ENCODE measurements at regions of chr20 and their contacts with region 1.

Region 1: GRCh38 chr20:51404298-51405060 is 138.0 kb downstream of the NFATC2 start:
- DNase-seq: peak; percentile 21 to 78 (median 36)
- ATAC-seq: peak; percentile 89
- H3K4me3 ChIP-seq: no peak overlapping the region
- H3K4me3 Mint-ChIP-seq: peak overlapping the region in 5 of 10 donors; percentile 3 to 74 (median 21)
- H3K27ac ChIP-seq: peak overlapping the region; percentile 62
- H3K27ac Mint-ChIP-seq: peak overlapping the region; percentile 82 to 100 (median 97)
- H3K4me1 ChIP-seq: peaks cover 48 to 95% of the 10 kb centered on the region in 2 donors
- H3K4me1 Mint-ChIP-seq: peaks cover 42 to 89% (median 62%) of the 10 kb centered on the region in 7 donors
- H3K27me3 ChIP-seq: no peaks in the 10 kb centered on the region
- H3K27me3 Mint-ChIP-seq: no peaks in the 10 kb centered on the region

Region 2: GRCh38 chr20:49594143-49594930 is 1810.1 kb before region 1 on chr20:
- CTCF ChIA-PET with region 1: no interaction called
- POLR2A ChIA-PET with region 1: no interaction called
- intact Hi-C with region 1: loop called in 1 of 2 experiments (anchors 5 kb)
- DNase-seq: peak in 1 of 9 donors; percentile 76
- ATAC-seq: no peak
- H3K4me3 ChIP-seq: no peak overlapping the region
- H3K4me3 Mint-ChIP-seq: peak overlapping the region in 1 of 10 donors; percentile 85
- H3K27ac ChIP-seq: no peak overlapping the region
- H3K27ac Mint-ChIP-seq: peak overlapping the region in 1 of 9 donors; percentile 97
- H3K4me1 ChIP-seq: peaks cover 0 to 38% of the 10 kb centered on the region in 2 donors
- H3K4me1 Mint-ChIP-seq: peaks cover 0 to 86% (median 4%) of the 10 kb centered on the region in 7 donors
- H3K27me3 ChIP-seq: no peaks in the 10 kb centered on the region
- H3K27me3 Mint-ChIP-seq: peaks cover 0 to 13% (median 4%) of the 10 kb centered on the region in 5 donors

Region 3: GRCh38 chr20:51385646-51386530 is 18.6 kb before region 1 on chr20:
- CTCF ChIA-PET with region 1: interaction called, 6 read pairs
- POLR2A ChIA-PET with region 1: interaction called, 7 read pairs
- intact Hi-C with region 1: loop called in 1 of 2 experiments (anchors 1 kb)
- DNase-seq: peak in 4 of 9 donors; percentile 10 to 27 (median 20)
- ATAC-seq: peak; percentile 48
- H3K4me3 ChIP-seq: no peak overlapping the region
- H3K4me3 Mint-ChIP-seq: no peak overlapping the region
- H3K27ac ChIP-seq: no peak overlapping the region
- H3K27ac Mint-ChIP-seq: peak overlapping the region in 8 of 9 donors; percentile 4 to 77 (median 62)
- H3K4me1 ChIP-seq: peaks cover 0 to 67% of the 10 kb centered on the region in 2 donors
- H3K4me1 Mint-ChIP-seq: peaks cover 0 to 61% (median 5%) of the 10 kb centered on the region in 7 donors
- H3K27me3 ChIP-seq: no peaks in the 10 kb centered on the region
- H3K27me3 Mint-ChIP-seq: no peaks in the 10 kb centered on the region

Region 4: GRCh38 chr20:51480507-51481270 is 76.2 kb after region 1 on chr20:
- CTCF ChIA-PET with region 1: no interaction called
- POLR2A ChIA-PET with region 1: no interaction called
- intact Hi-C with region 1: loop called in 1 of 2 experiments (anchors 1 kb)
- DNase-seq: peak in 2 of 9 donors; percentile 36 to 66
- ATAC-seq: peak; percentile 68
- H3K4me3 ChIP-seq: peak overlapping the region; percentile 8
- H3K4me3 Mint-ChIP-seq: peak overlapping the region; percentile 60 to 86 (median 76)
- H3K27ac ChIP-seq: peak overlapping the region; percentile 63
- H3K27ac Mint-ChIP-seq: peak overlapping the region; percentile 60 to 94 (median 88)
- H3K4me1 ChIP-seq: peaks cover 30 to 33% of the 10 kb centered on the region in 2 donors
- H3K4me1 Mint-ChIP-seq: peaks cover 64 to 90% (median 86%) of the 10 kb centered on the region in 7 donors
- H3K27me3 ChIP-seq: no peaks in the 10 kb centered on the region
- H3K27me3 Mint-ChIP-seq: no peaks in the 10 kb centered on the region

Region 5: GRCh38 chr20:51512645-51513044 is 108.2 kb after region 1 on chr20:
- CTCF ChIA-PET with region 1: no interaction called
- POLR2A ChIA-PET with region 1: no interaction called
- intact Hi-C with region 1: loop called in 1 of 2 experiments (anchors 5 kb)
- DNase-seq: peak in 6 of 9 donors; percentile 34 to 61 (median 44)
- ATAC-seq: peak; percentile 80
- H3K4me3 ChIP-seq: peak overlapping the region; percentile 9
- H3K4me3 Mint-ChIP-seq: peak overlapping the region; percentile 47 to 81 (median 62)
- H3K27ac ChIP-seq: peak overlapping the region; percentile 61
- H3K27ac Mint-ChIP-seq: peak overlapping the region; percentile 82 to 94 (median 91)
- H3K4me1 ChIP-seq: peaks cover 60 to 61% of the 10 kb centered on the region in 2 donors
- H3K4me1 Mint-ChIP-seq: peaks cover 57 to 97% (median 89%) of the 10 kb centered on the region in 7 donors
- H3K27me3 ChIP-seq: no peaks in the 10 kb centered on the region
- H3K27me3 Mint-ChIP-seq: no peaks in the 10 kb centered on the region

Measured in naive thymus-derived CD4-positive, alpha-beta T cell (primary cell).